Calu3 (cell line): ENCODE measurements at regions of chr1 and their contacts with region 1.

Region 1: DNA sequence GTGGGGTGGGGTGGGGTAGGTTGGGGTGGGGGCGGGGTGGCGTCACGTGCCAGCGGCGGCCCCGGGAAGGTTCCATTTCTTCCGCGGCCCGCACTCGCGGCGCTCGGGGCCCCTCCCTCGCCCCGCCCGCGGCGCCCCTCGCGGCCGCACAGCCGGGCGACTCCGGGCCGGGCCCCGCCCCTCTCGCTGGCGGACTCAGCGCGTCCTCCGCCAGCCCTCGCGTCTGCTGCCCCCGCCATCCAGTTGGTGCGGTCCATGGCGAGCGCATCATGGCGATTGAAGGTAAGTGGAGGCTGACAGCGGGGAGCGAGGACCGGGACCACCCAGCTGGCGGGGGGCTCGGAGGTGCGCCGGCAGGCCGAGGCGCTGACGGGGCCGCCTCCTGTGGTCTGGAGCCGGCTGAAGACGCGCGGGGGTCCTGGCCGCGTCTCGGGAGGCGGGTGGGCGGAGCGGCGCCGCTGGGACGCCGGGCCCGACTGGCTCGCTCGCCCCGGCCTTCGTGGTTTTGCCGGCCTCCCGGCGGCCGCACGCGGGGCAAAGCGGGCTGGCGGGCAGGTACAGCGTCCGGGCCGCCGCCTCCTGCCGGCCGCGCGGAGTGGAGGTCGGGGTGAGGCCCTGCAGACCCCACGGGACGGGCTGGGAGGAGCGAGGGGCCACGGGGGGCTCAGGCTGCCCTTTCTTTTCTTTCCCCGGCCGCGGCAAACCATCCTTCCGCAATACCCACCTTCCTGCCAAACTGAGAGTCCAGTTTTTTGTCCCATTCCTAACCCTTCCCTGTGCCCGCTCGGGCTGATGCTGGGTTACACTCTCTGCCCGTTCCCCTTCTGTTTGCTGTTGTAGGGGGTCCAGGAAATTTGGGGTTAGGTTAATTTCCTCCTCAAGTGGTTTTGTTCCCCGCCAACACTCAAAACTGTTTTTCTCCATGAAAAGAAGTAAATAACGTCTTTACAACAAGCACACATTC is at the start of gene SYT14:
- DNase-seq: peak; percentile 29
- H3K4me3 Mint-ChIP-seq: peak within 1 kb of the TSS; percentile 68
- H3K27ac Mint-ChIP-seq: peak within 1 kb of the TSS; percentile 60
- H3K4me1 Mint-ChIP-seq: peaks cover 8% of the 10 kb centered on the region
- H3K27me3 Mint-ChIP-seq: no peaks in the 10 kb centered on the region
- CTCF ChIP-seq: no peak
- total RNA-seq, gene SYT14: 1.7 and 2.1 TPM in 2 replicates

Region 2: GRCh38 chr1:208374391-208374941 is 1563.8 kb before region 1 on chr1:
- CTCF ChIA-PET with region 1: no interaction called
- intact Hi-C with region 1: no loop called
- DNase-seq: no peak
- H3K4me3 Mint-ChIP-seq: no peak overlapping the region
- H3K27ac Mint-ChIP-seq: no peak overlapping the region
- H3K4me1 Mint-ChIP-seq: no peaks in the 10 kb centered on the region
- H3K27me3 Mint-ChIP-seq: peaks cover 21% of the 10 kb centered on the region
- CTCF ChIP-seq: no peak

Region 3: DNA sequence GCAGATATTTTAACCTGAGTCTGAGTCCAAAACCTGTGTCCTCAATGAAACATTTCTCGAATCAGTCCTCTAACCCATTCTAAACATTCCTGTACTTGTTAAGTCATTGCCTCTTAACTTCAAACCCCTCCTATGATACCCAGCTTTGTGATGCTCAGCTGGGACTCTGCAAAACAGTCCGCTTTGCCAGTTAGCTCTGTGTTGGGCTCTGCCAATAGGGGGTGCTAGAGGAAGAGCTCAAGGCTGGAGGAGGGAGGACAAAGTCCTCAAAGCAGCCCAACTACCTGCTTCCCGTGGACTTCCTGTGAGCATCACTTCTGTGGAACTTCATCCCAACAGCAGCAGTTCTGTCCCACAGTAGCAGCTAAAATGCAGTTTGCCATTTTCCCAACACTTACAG is 38.3 kb before region 1 on chr1:
- CTCF ChIA-PET with region 1: no interaction called
- intact Hi-C with region 1: loop called (anchors 2 kb)
- DNase-seq: peak; percentile 42
- H3K4me3 Mint-ChIP-seq: no peak overlapping the region
- H3K27ac Mint-ChIP-seq: no peak overlapping the region
- H3K4me1 Mint-ChIP-seq: peaks cover 36% of the 10 kb centered on the region
- H3K27me3 Mint-ChIP-seq: no peaks in the 10 kb centered on the region
- CTCF ChIP-seq: peak; percentile 39

Region 4: DNA sequence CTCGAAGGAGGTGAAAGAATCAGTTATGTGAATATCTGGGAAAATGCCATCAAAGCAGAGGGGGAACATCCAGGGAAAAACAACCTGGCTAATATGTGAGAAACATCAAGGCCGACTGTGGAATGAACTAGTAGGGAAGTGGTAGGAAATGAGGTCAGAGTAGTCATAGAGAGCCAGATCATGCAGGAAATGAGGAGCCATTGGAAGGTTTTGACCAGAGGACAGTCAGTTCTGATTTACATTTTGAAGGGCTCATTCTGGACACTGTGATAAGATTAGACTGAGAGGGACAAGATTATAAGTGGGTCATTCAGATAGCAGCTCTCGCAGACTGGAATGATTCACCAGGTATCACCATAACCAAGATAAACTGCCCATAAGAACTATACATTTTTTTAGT is 63.5 kb after region 1 on chr1:
- CTCF ChIA-PET with region 1: no interaction called
- intact Hi-C with region 1: no loop called
- DNase-seq: no peak
- H3K4me3 Mint-ChIP-seq: no peak overlapping the region
- H3K27ac Mint-ChIP-seq: no peak overlapping the region
- H3K4me1 Mint-ChIP-seq: peaks cover 6% of the 10 kb centered on the region
- H3K27me3 Mint-ChIP-seq: no peaks in the 10 kb centered on the region
- CTCF ChIP-seq: no peak

Region 5: GRCh38 chr1:210132582-210132981 is 194.3 kb after region 1 on chr1:
- CTCF ChIA-PET with region 1: no interaction called
- intact Hi-C with region 1: loop called (anchors 5 kb)
- DNase-seq: peak; percentile 31
- H3K4me3 Mint-ChIP-seq: no peak overlapping the region
- H3K27ac Mint-ChIP-seq: no peak overlapping the region
- H3K4me1 Mint-ChIP-seq: no peaks in the 10 kb centered on the region
- H3K27me3 Mint-ChIP-seq: no peaks in the 10 kb centered on the region
- CTCF ChIP-seq: no peak